GM12878 (cell line): ENCODE measurements at regions of chr4 and their contacts with region 1.

Region 1: GRCh38 chr4:15882675-15883086 is 55.9 kb downstream of the FGFBP1 start:
- DNase-seq: peak; percentile 64
- ATAC-seq: peak; percentile 97
- H3K4me3 ChIP-seq: no peak overlapping the region
- H3K27ac ChIP-seq: no peak overlapping the region
- H3K4me1 ChIP-seq: no peaks in the 10 kb centered on the region
- H3K27me3 ChIP-seq: no peaks in the 10 kb centered on the region
- CTCF ChIP-seq: peak; percentile 88 to 91 (median 89)
- EP300 ChIP-seq: no peak
- POLR2A ChIP-seq: no peak
- RAD21 ChIP-seq: peak; percentile 81

Region 2: GRCh38 chr4:15729910-15730533 is 152.7 kb before region 1 on chr4:
- CTCF ChIA-PET with region 1: interaction called, 52 read pairs
- POLR2A ChIA-PET with region 1: interaction called, 5 read pairs
- RAD21 ChIA-PET with region 1: interaction called, 13 read pairs
- SMC1A ChIA-PET with region 1: interaction called, 47 read pairs
- in situ Hi-C with region 1: no loop called
- intact Hi-C with region 1: loop called (anchors 1 kb)
- DNase-seq: peak; percentile 2
- ATAC-seq: peak; percentile 84
- H3K4me3 ChIP-seq: no peak overlapping the region
- H3K27ac ChIP-seq: no peak overlapping the region
- H3K4me1 ChIP-seq: no peaks in the 10 kb centered on the region
- H3K27me3 ChIP-seq: no peaks in the 10 kb centered on the region; a peak in 1 of 4 replicates
- CTCF ChIP-seq: peak; percentile 69 to 77 (median 74)
- EP300 ChIP-seq: no peak
- POLR2A ChIP-seq: no peak
- RAD21 ChIP-seq: peak; percentile 92

Region 3: DNA sequence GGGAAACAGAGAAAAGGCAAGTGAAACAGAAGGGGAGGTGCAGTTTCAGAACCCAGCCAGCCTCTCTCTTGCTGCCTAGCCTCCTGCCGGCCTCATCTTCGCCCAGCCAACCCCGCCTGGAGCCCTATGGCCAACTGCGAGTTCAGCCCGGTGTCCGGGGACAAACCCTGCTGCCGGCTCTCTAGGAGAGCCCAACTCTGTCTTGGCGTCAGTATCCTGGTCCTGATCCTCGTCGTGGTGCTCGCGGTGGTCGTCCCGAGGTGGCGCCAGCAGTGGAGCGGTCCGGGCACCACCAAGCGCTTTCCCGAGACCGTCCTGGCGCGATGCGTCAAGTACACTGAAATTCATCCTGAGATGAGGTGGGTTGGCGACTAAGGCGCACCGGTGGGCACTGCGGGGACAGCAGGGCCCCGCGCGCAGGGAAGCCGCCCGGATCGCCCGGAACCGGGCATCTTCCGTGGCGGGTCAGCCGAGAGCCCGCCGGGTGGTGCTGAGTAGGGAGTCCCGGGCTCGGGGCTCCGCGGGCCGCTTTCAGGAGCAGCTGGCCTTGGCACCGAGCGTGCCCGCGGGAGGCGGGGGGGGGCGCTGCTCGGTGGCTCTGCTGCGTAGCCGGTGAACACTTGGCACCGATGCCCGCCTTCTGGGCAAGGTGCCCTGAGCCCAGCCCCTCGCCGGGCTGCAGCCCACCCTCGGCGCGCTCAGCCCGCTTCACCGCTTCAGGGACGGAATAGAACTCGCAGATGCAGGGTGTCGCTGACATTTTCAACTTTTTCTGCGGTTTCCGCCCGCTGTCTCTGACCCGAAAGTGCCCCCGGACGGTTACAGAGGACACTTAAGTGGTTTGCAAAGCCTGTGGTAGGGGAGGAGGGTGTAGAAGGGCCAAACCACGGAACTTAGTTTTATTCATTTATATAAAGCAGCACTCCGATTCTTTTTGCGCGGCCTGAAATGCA is 104.1 kb before region 1 on chr4 and contains the start of gene CD38:
- CTCF ChIA-PET with region 1: interaction called, 13 read pairs
- POLR2A ChIA-PET with region 1: no interaction called
- RAD21 ChIA-PET with region 1: interaction called, 10 read pairs
- SMC1A ChIA-PET with region 1: interaction called, 12 read pairs
- in situ Hi-C with region 1: no loop called
- intact Hi-C with region 1: no loop called
- DNase-seq: no peak
- ATAC-seq: peak; percentile 85
- H3K4me3 ChIP-seq: peak within 1 kb of the TSS; percentile 72
- H3K27ac ChIP-seq: peak within 1 kb of the TSS; percentile 78
- H3K4me1 ChIP-seq: peaks cover 36% of the 10 kb centered on the region
- H3K27me3 ChIP-seq: peaks cover 0 to 3% of the 10 kb centered on the region in 2 experiments; a peak in 1 of 4 replicates
- CTCF ChIP-seq: 0 out of 6 replicates have a peak, but pooled peaks of 2 of the 3 experiments have one; percentile 7 to 15
- EP300 ChIP-seq: peak; percentile 65 to 77
- POLR2A ChIP-seq: peak; percentile 78
- RAD21 ChIP-seq: no peak
- polyA plus RNA-seq, gene CD38: 3.5 to 4.8 TPM

Region 4: GRCh38 chr4:15811703-15812337 is 70.9 kb before region 1 on chr4:
- CTCF ChIA-PET with region 1: interaction called, 188 read pairs
- POLR2A ChIA-PET with region 1: no interaction called
- RAD21 ChIA-PET with region 1: interaction called, 117 read pairs
- SMC1A ChIA-PET with region 1: interaction called, 152 read pairs
- in situ Hi-C with region 1: loop called (anchors 5 kb)
- intact Hi-C with region 1: no loop called
- DNase-seq: no peak
- ATAC-seq: no peak
- H3K4me3 ChIP-seq: no peak overlapping the region
- H3K27ac ChIP-seq: no peak overlapping the region
- H3K4me1 ChIP-seq: peaks cover 7% of the 10 kb centered on the region; the same call in 1 of the 2 replicates
- H3K27me3 ChIP-seq: no peaks in the 10 kb centered on the region
- CTCF ChIP-seq: no peak
- EP300 ChIP-seq: no peak
- POLR2A ChIP-seq: no peak
- RAD21 ChIP-seq: no peak

Region 5: GRCh38 chr4:15893962-15894361 is 11.3 kb after region 1 on chr4:
- CTCF ChIA-PET with region 1: interaction called, 26 read pairs
- POLR2A ChIA-PET with region 1: no interaction called
- RAD21 ChIA-PET with region 1: interaction called, 6 read pairs
- SMC1A ChIA-PET with region 1: interaction called, 26 read pairs
- in situ Hi-C with region 1: no loop called
- intact Hi-C with region 1: no loop called
- DNase-seq: no peak
- ATAC-seq: no peak
- H3K4me3 ChIP-seq: no peak overlapping the region
- H3K27ac ChIP-seq: no peak overlapping the region
- H3K4me1 ChIP-seq: peaks cover 13% of the 10 kb centered on the region; the same call in 1 of the 2 replicates
- H3K27me3 ChIP-seq: no peaks in the 10 kb centered on the region
- CTCF ChIP-seq: no peak
- EP300 ChIP-seq: no peak
- POLR2A ChIP-seq: no peak
- RAD21 ChIP-seq: no peak

Region 6: DNA sequence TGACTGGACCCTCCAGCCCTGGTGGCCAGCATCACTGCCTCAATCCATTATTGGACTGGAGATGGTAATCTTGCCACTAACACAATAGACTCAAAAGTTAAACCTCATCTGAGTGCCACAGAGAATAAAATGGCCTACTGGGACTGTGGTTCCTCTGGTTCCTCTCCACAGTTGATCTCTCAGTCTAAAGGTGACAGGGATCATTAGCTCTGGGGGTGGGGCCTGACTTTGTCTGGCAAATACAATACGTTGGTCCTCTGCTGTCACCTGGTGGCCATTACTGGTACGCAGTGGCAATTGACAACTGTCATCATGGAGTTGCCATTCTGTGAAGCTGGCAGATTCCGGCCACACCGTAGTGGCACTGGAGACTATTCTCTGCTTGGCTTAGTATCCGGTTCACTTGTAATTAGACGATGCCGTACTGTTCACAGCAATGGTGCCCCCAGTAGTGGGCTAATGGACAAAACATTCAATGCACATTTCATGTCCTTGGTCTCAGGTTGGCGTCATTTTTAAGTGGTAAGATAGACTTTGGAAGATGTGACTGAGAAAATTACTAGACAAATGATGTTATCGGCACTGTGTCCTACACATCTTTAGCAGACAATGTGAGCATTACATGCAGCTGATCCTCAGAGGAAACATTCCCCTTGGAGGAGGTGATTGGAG is 73.6 kb after region 1 on chr4:
- CTCF ChIA-PET with region 1: interaction called, 194 read pairs
- POLR2A ChIA-PET with region 1: interaction called, 12 read pairs
- RAD21 ChIA-PET with region 1: interaction called, 142 read pairs
- SMC1A ChIA-PET with region 1: interaction called, 179 read pairs
- in situ Hi-C with region 1: loop called (anchors 10 kb)
- intact Hi-C with region 1: loop called (anchors 1 kb)
- DNase-seq: peak; percentile 55
- ATAC-seq: peak; percentile 90
- H3K4me3 ChIP-seq: no peak overlapping the region
- H3K27ac ChIP-seq: no peak overlapping the region
- H3K4me1 ChIP-seq: 0 out of 2 replicates have a peak, but pooled peaks cover 3% of the 10 kb centered on the region
- H3K27me3 ChIP-seq: no peaks in the 10 kb centered on the region
- CTCF ChIP-seq: peak; percentile 86 to 98 (median 92)
- EP300 ChIP-seq: no peak
- POLR2A ChIP-seq: no peak
- RAD21 ChIP-seq: peak; percentile 95